H1 (cell line): ENCODE measurements at regions of chr1 and their contacts with region 1.

Region 1: GRCh38 chr1:212477014-212477679 is 44.4 kb downstream of the NENF start:
- DNase-seq: peak; percentile 67 to 81
- H3K4me3 ChIP-seq: no peak overlapping the region
- H3K27ac ChIP-seq: no peak overlapping the region
- H3K4me1 ChIP-seq: peaks cover 0 to 2% (median 0%) of the 10 kb centered on the region in 4 experiments; a peak in 1 of 7 replicates
- H3K27me3 ChIP-seq: no peaks in the 10 kb centered on the region
- CTCF ChIP-seq: peak; percentile 75 to 95 (median 93)
- EP300 ChIP-seq: no peak
- POLR2A ChIP-seq: no peak
- RAD21 ChIP-seq: peak; percentile 94 to 97

Region 2: GRCh38 chr1:212346601-212347000 is 130.5 kb before region 1 on chr1:
- CTCF ChIA-PET with region 1: no interaction called
- POLR2A ChIA-PET with region 1: no interaction called
- DNase-seq: no peak
- H3K4me3 ChIP-seq: no peak overlapping the region
- H3K27ac ChIP-seq: no peak overlapping the region
- H3K4me1 ChIP-seq: no peaks in the 10 kb centered on the region
- H3K27me3 ChIP-seq: no peaks in the 10 kb centered on the region
- CTCF ChIP-seq: no peak
- EP300 ChIP-seq: no peak
- POLR2A ChIP-seq: no peak
- RAD21 ChIP-seq: no peak

Region 3: DNA sequence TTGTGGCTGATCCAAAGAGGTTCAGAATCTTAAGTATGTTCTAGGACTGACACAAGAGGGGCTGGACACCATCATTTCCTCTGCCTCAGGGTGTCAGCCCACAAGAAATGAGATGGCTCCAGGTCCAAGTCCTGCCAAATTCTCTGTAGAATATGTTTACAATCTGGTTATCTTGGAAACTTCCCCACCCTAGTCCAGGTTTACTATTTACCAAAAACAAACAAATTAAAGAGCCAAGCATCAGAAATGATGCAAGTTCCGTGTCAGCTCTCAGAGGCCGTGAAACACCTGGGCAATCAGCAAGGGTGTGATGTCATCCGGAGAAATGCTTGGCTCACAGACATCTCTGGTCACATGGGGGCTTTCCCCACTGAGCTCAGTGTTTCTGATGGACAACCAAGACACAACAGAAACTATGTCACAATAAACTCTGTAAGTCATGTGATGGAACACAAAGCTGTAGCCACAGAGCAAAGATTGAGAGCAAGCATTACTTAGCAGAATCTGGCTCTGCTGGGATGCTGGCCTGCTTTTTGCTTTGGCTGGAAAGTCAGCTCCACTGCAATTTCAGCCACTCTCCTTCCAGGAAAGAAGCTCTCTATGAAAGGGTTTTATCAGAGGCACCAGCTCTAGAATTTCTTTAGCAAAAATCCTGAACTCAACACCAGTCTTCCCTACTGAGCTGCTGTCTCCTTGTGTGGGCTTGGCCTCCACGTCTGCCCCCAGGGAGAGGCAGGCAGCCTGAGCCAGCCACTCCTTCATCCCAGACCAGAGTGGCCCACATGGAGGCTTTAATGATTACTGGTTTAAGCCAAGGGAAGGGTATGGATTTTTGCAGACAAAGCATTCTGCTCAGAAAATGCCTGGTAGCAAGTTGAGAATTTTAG is 11.5 kb after region 1 on chr1:
- CTCF ChIA-PET with region 1: interaction called, 24 read pairs
- POLR2A ChIA-PET with region 1: interaction called, 3 read pairs
- DNase-seq: no peak
- H3K4me3 ChIP-seq: no peak overlapping the region
- H3K27ac ChIP-seq: no peak overlapping the region
- H3K4me1 ChIP-seq: peaks cover 0 to 6% (median 1%) of the 10 kb centered on the region in 4 experiments; a peak in 4 of 7 replicates
- H3K27me3 ChIP-seq: no peaks in the 10 kb centered on the region
- CTCF ChIP-seq: no peak
- EP300 ChIP-seq: no peak
- POLR2A ChIP-seq: no peak
- RAD21 ChIP-seq: no peak

Region 4: DNA sequence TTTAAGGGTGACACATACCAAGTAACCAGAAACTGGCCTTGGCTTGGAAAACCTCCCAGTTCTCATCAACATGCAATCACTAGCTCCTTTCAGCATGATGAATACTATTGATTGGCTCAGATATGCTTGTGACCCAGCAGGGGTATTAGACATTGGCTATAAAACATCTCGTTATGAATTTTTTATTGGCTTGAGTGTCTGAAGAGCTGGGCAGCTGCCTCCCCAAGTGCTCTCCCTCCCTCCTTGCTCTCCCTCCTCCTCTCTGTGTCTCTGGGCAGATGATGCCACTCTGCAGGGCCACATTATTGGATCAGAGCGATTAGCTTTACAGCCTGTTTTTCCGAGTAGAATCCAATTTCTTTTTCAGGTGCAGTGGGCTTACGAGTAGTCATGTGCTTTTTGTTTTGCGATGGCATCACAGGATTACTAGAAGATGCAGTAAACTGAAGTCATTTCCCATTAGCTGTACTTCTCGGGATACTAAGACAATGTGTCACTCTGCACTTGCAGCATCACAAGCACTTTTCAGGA is 52.1 kb after region 1 on chr1:
- CTCF ChIA-PET with region 1: interaction called, 14 read pairs
- POLR2A ChIA-PET with region 1: no interaction called
- DNase-seq: no peak
- H3K4me3 ChIP-seq: no peak overlapping the region
- H3K27ac ChIP-seq: no peak overlapping the region
- H3K4me1 ChIP-seq: no peaks in the 10 kb centered on the region
- H3K27me3 ChIP-seq: no peaks in the 10 kb centered on the region
- CTCF ChIP-seq: no peak
- EP300 ChIP-seq: no peak
- POLR2A ChIP-seq: no peak
- RAD21 ChIP-seq: no peak

Region 5: DNA sequence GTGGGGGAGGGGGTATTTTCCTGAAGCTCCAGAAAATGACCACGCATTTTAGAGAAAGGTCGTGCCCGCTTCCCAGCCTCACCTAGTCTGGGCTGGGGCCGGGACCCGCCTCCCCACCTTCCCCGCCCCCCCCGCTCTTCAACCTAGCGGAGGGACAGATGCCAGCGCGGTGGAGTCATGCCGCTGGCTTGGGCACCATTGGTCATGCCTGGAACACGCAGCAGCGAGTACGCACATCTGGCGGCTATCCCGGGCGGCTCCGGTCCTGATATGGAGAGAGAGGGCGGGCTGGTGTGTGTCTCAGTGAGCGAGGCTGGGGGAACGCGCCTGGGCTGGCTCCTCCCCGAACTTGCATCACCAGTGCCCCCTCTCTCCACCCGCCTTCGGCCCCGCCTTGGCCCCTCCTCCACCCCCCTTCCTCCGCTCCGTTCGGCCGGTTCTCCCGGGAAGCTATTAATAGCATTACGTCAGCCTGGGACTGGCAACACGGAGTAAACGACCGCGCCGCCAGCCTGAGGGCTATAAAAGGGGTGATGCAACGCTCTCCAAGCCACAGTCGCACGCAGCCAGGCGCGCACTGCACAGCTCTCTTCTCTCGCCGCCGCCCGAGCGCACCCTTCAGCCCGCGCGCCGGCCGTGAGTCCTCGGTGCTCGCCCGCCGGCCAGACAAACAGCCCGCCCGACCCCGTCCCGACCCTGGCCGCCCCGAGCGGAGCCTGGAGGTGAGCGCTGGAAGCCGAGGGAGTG is 131.2 kb after region 1 on chr1 and contains the start of gene ATF3:
- CTCF ChIA-PET with region 1: interaction called, 10 read pairs
- POLR2A ChIA-PET with region 1: interaction called, 56 read pairs
- DNase-seq: peak; percentile 96 to 99
- H3K4me3 ChIP-seq: peak within 1 kb of the TSS; percentile 51 to 96 (median 74)
- H3K27ac ChIP-seq: peak within 1 kb of the TSS; percentile 71; the same call in 1 of the 2 replicates
- H3K4me1 ChIP-seq: peaks cover 14 to 41% (median 26%) of the 10 kb centered on the region in 4 experiments
- H3K27me3 ChIP-seq: peaks cover 10 to 38% (median 27%) of the 10 kb centered on the region in 4 experiments; a peak in 6 of 7 replicates
- CTCF ChIP-seq: no peak
- EP300 ChIP-seq: no peak
- POLR2A ChIP-seq: peak; percentile 99
- RAD21 ChIP-seq: peak in 1 of 2 experiments; percentile 13; a peak in 1 of 4 replicates
- total RNA-seq, gene ATF3: 21.5 and 27.7 TPM in 2 replicates

Region 6: DNA sequence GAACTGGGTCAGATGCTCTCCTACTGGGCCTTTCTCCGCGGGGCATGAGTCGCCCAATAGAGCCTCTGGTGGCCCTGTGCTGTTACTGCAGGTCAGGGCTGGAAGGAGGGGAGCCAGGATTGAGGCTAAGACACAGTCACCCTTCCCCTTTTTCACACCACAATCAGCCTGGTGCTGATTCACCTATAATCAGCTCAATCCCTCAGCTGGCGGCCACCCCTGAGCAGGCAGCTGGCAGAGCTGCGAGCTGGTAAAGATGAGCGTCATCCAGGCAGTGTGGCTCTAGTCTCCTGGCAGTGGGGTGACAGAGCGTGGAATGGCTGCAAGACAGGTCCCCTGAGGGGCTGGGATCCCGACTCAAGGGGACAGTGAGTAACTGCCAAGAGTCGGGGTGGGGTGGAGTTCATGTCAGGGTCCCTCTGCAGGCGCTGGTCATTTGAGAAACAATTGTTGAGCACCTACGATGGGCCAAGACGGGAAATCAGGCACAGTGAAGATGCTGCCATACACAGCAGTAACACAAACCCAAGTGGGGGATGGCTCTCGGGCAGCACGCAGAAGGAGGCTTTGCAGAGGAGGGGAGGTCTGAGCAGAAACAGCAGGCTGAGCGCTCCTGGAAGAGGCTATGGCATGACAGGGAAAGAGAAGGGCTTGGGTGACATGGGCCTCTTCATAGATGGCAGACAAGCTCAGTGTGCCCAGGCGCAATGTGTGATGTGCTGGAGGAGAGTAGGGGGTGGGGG is 153.2 kb after region 1 on chr1:
- CTCF ChIA-PET with region 1: interaction called, 11 read pairs
- POLR2A ChIA-PET with region 1: no interaction called
- DNase-seq: peak in 1 of 2 experiments; percentile 84
- H3K4me3 ChIP-seq: no peak overlapping the region
- H3K27ac ChIP-seq: no peak overlapping the region
- H3K4me1 ChIP-seq: peaks cover 0 to 10% (median 4%) of the 10 kb centered on the region in 4 experiments; a peak in 6 of 7 replicates
- H3K27me3 ChIP-seq: no peaks in the 10 kb centered on the region
- CTCF ChIP-seq: peak; percentile 74 to 94 (median 88)
- EP300 ChIP-seq: no peak
- POLR2A ChIP-seq: no peak
- RAD21 ChIP-seq: peak; percentile 59 to 70

Region 7: GRCh38 chr1:212678456-212679410 is 201.6 kb after region 1 on chr1:
- CTCF ChIA-PET with region 1: interaction called, 10 read pairs
- POLR2A ChIA-PET with region 1: no interaction called
- DNase-seq: no peak
- H3K4me3 ChIP-seq: no peak overlapping the region
- H3K27ac ChIP-seq: no peak overlapping the region
- H3K4me1 ChIP-seq: no peaks in the 10 kb centered on the region; a peak in 2 of 7 replicates
- H3K27me3 ChIP-seq: no peaks in the 10 kb centered on the region
- CTCF ChIP-seq: no peak
- EP300 ChIP-seq: no peak
- POLR2A ChIP-seq: no peak
- RAD21 ChIP-seq: no peak